ENCODE measurements at regions of chr6 and their contacts with region 1.

Region 1: GRCh38 chr6:79869600-79870084 is 77.7 kb downstream of the ELOVL4 start:
- DNase-seq: peak; percentile 60 to 88 (median 68)
- ATAC-seq: peak; percentile 99
- H3K4me3 ChIP-seq: peak overlapping the region; percentile 19
- H3K4me3 Mint-ChIP-seq: peak overlapping the region; percentile 35
- H3K27ac ChIP-seq: no peak overlapping the region
- H3K27ac Mint-ChIP-seq: no peak overlapping the region
- H3K4me1 ChIP-seq: peaks cover 9% of the 10 kb centered on the region
- H3K4me1 Mint-ChIP-seq: peaks cover 15% of the 10 kb centered on the region
- H3K27me3 ChIP-seq: peaks cover 0 to 6% of the 10 kb centered on the region in 2 experiments
- H3K27me3 Mint-ChIP-seq: peaks cover 14% of the 10 kb centered on the region
- CTCF ChIP-seq: peak; percentile 97

Region 2: DNA sequence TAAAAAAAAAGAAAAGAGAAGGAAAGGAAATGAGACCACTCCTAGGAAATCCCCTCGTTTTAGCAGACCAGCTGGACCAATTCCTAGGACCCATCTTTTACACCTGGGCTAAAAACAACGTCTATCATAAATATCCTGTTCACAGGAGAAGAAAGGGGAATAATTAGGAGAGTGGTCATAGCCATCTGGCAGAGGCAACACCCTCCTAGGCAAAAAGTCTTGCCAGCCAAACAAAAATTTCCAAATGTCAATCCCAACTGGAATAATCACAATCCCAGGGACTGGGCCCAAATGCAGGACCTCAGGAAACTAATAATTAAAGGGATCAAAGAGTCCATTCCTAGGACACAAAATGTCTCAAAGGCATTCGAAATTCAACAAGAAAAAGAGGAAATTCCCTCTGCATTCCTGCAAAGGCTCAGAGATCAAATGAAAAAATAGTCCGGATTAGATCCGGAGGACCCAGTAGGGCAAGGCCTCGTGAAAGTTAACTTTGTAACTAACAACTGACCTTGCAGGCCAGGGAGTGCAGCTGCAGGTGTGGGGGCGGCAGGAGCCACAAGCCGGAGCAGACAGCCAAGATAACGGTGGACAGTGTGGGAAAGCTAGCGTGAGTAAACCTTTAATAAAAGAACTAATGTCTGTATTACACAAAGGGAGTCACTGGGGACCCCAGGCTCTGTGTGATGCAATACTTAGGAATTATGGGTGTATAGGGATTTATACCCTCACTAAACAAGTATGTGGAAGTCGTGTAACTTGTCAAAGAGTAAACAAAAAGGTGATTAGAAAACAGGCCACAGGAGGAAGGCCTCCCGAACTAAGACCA is 344.2 kb before region 1 on chr6:
- CTCF ChIA-PET with region 1: no interaction called
- POLR2A ChIA-PET with region 1: no interaction called
- intact Hi-C with region 1: no loop called
- DNase-seq: no peak
- ATAC-seq: no peak
- H3K4me3 ChIP-seq: no peak overlapping the region
- H3K4me3 Mint-ChIP-seq: no peak overlapping the region
- H3K27ac ChIP-seq: no peak overlapping the region
- H3K27ac Mint-ChIP-seq: no peak overlapping the region
- H3K4me1 ChIP-seq: no peaks in the 10 kb centered on the region
- H3K4me1 Mint-ChIP-seq: no peaks in the 10 kb centered on the region
- H3K27me3 ChIP-seq: no peaks in the 10 kb centered on the region
- H3K27me3 Mint-ChIP-seq: no peaks in the 10 kb centered on the region
- CTCF ChIP-seq: no peak

Region 3: GRCh38 chr6:79564636-79565035 is 305.0 kb before region 1 on chr6:
- CTCF ChIA-PET with region 1: no interaction called
- POLR2A ChIA-PET with region 1: no interaction called
- intact Hi-C with region 1: loop called in 1 of 2 experiments (anchors 10 kb)
- DNase-seq: no peak
- ATAC-seq: no peak
- H3K4me3 ChIP-seq: no peak overlapping the region
- H3K4me3 Mint-ChIP-seq: no peak overlapping the region
- H3K27ac ChIP-seq: no peak overlapping the region
- H3K27ac Mint-ChIP-seq: no peak overlapping the region
- H3K4me1 ChIP-seq: no peaks in the 10 kb centered on the region
- H3K4me1 Mint-ChIP-seq: no peaks in the 10 kb centered on the region
- H3K27me3 ChIP-seq: no peaks in the 10 kb centered on the region
- H3K27me3 Mint-ChIP-seq: no peaks in the 10 kb centered on the region
- CTCF ChIP-seq: no peak

Region 4: DNA sequence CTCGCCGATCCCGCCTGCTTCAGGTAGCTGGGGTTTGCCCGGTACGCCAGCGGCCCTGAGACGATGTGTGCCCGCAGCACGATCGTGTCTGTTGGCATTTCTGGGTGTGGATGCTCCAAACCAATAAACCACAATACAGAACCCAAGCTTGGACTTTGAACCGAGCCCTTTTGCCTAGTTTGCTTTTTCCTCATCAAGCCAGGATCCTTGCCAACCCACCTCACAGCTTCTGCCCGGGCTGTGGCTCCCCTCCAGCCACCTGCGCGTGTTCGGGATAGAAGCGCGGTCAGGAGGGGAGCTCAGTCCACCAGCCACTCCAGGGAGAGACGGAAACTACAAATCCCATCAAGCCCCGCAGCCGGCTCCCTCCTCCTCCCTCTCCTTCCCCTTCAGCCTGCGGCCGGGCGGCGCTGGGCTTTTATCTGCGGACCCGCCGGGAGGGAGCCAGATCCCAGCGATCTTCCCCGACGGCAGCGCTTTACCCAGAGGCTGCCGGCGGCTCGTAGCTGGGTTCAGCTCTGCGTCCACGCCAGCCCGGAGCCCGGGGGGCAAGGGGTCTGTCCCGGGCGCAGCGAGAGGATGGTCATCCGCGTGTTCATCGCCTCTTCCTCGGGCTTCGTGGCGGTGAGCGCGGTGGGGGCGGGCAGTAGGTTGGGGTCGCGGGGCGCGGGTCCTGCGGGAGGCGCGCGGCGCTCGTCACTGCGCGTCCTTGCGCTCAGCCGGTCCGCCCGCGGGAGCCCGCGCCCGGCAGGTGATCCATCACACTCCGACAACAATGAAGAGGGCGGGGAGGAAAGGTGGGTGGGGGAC is 238.6 kb before region 1 on chr6 and contains the start of gene SH3BGRL2:
- CTCF ChIA-PET with region 1: no interaction called
- POLR2A ChIA-PET with region 1: no interaction called
- intact Hi-C with region 1: loop called in 1 of 2 experiments (anchors 5 kb)
- DNase-seq: peak in 7 of 14 experiments; percentile 12 to 45 (median 24)
- ATAC-seq: peak; percentile 24
- H3K4me3 ChIP-seq: peak within 1 kb of the TSS; percentile 62
- H3K4me3 Mint-ChIP-seq: peak within 1 kb of the TSS; percentile 85
- H3K27ac ChIP-seq: no peak within 1 kb of the TSS
- H3K27ac Mint-ChIP-seq: no peak within 1 kb of the TSS
- H3K4me1 ChIP-seq: peaks cover 11% of the 10 kb centered on the region
- H3K4me1 Mint-ChIP-seq: peaks cover 8% of the 10 kb centered on the region
- H3K27me3 ChIP-seq: peaks cover 27 to 57% of the 10 kb centered on the region in 2 experiments
- H3K27me3 Mint-ChIP-seq: peaks cover 64% of the 10 kb centered on the region
- CTCF ChIP-seq: no peak
- total RNA-seq, gene SH3BGRL2: 0.25 to 0.38 TPM

Region 5: GRCh38 chr6:79813854-79814709 is 55.6 kb before region 1 on chr6:
- CTCF ChIA-PET with region 1: no interaction called
- POLR2A ChIA-PET with region 1: no interaction called
- intact Hi-C with region 1: no loop called
- DNase-seq: peak; percentile 24 to 69 (median 46)
- ATAC-seq: peak; percentile 46
- H3K4me3 ChIP-seq: no peak overlapping the region
- H3K4me3 Mint-ChIP-seq: no peak overlapping the region
- H3K27ac ChIP-seq: no peak overlapping the region
- H3K27ac Mint-ChIP-seq: no peak overlapping the region
- H3K4me1 ChIP-seq: no peaks in the 10 kb centered on the region
- H3K4me1 Mint-ChIP-seq: no peaks in the 10 kb centered on the region
- H3K27me3 ChIP-seq: no peaks in the 10 kb centered on the region
- H3K27me3 Mint-ChIP-seq: peaks cover 15% of the 10 kb centered on the region
- CTCF ChIP-seq: peak; percentile 87

Region 6: GRCh38 chr6:79949233-79949632 is 79.6 kb after region 1 on chr6:
- CTCF ChIA-PET with region 1: interaction called, 4 read pairs
- POLR2A ChIA-PET with region 1: interaction called, 4 read pairs
- intact Hi-C with region 1: loop called in 1 of 2 experiments (anchors 2 kb)
- DNase-seq: peak in 12 of 14 experiments; percentile 4 to 87 (median 32)
- ATAC-seq: peak; percentile 38
- H3K4me3 ChIP-seq: no peak overlapping the region
- H3K4me3 Mint-ChIP-seq: peak overlapping the region; percentile 68
- H3K27ac ChIP-seq: no peak overlapping the region
- H3K27ac Mint-ChIP-seq: no peak overlapping the region
- H3K4me1 ChIP-seq: peaks cover 25% of the 10 kb centered on the region
- H3K4me1 Mint-ChIP-seq: peaks cover 29% of the 10 kb centered on the region
- H3K27me3 ChIP-seq: peaks cover 7 to 31% of the 10 kb centered on the region in 2 experiments
- H3K27me3 Mint-ChIP-seq: peaks cover 23% of the 10 kb centered on the region
- CTCF ChIP-seq: peak; percentile 81

Region 7: GRCh38 chr6:80094017-80094416 is 224.4 kb after region 1 on chr6:
- CTCF ChIA-PET with region 1: no interaction called
- POLR2A ChIA-PET with region 1: no interaction called
- intact Hi-C with region 1: loop called in 1 of 2 experiments (anchors 5 kb)
- DNase-seq: peak in 4 of 14 experiments; percentile 20 to 52 (median 48)
- ATAC-seq: no peak
- H3K4me3 ChIP-seq: no peak overlapping the region
- H3K4me3 Mint-ChIP-seq: no peak overlapping the region
- H3K27ac ChIP-seq: no peak overlapping the region
- H3K27ac Mint-ChIP-seq: no peak overlapping the region
- H3K4me1 ChIP-seq: no peaks in the 10 kb centered on the region
- H3K4me1 Mint-ChIP-seq: no peaks in the 10 kb centered on the region
- H3K27me3 ChIP-seq: no peaks in the 10 kb centered on the region
- H3K27me3 Mint-ChIP-seq: no peaks in the 10 kb centered on the region
- CTCF ChIP-seq: peak; percentile 78